CD4-positive, alpha-beta T cell (primary cell): ENCODE measurements at regions of chr4 and their contacts with region 1.

Region 1: DNA sequence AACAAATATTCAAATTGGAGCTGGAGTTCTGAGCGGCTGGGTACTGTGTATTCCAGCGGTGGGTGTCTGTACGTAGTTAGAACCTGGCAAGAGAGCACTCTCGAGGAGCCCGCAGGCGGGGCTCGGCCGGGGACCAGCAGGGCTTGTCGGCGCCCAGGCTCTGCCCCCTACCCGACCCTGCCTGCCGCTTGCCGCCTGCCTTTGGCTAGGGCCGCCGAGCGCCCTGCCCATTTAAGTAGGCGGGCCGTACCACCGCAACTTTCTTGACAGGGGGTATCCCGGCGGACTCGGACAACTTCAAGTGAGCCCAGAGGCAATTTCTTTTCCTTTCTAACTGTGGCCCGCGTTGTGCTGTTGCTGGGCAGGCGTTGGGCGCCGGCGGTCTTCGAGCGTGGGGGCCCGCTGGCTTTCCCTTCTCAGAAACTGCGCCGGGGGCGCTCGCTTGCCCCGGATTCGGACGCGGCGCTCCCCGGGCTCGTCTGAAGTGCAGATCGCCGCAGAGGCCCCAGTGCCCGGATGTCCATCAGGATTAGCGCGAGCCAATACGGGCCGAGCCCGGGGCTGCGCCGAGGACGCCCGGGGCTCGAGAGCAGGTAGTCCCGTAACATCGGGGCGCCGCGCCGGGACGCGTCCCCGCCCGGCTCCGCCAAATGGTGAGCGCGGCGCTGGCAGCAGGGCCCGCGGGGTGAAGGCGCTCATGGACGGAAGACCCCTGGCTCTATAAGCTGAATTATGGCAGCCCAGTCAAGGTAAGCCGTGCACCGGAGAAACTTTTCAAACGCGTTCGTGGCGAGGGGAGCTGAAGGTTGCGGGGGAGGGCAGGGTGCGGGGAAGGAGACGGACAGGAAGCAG is 72.1 kb downstream of the AFF1 start:
- DNase-seq: peak; percentile 82 to 95 (median 88)
- ATAC-seq: peak; percentile 25
- H3K4me3 ChIP-seq: peak overlapping the region; percentile 89
- H3K4me3 Mint-ChIP-seq: peak overlapping the region; percentile 90
- H3K27ac ChIP-seq: peak overlapping the region; percentile 83 to 90
- H3K27ac Mint-ChIP-seq: peak overlapping the region; percentile 96
- H3K4me1 ChIP-seq: peaks cover 24% of the 10 kb centered on the region
- H3K4me1 Mint-ChIP-seq: peaks cover 58% of the 10 kb centered on the region
- H3K27me3 ChIP-seq: no peaks in the 10 kb centered on the region
- H3K27me3 Mint-ChIP-seq: no peaks in the 10 kb centered on the region
- CTCF ChIP-seq: peak; percentile 65

Region 2: DNA sequence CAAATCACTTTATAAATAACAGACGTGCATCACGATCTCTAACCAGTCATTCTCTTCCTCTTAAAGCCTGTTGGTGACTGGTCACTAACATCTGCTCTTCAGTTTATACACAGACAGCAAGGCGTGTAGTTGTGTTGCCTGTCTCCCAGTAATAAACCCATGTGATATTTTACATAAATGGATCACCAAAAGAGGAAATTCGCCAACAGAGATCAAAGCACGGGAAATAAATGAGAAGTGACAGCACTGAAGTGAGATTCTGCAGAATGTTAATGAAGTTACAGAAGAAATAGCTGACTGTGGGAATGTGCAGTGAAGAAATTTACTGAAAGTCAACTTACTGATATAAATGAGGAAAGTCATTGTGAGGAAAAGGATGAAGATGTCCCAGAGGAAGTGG is 25.1 kb before region 1 on chr4:
- CTCF ChIA-PET with region 1: no interaction called
- POLR2A ChIA-PET with region 1: interaction called, 13 read pairs
- intact Hi-C with region 1: no loop called
- DNase-seq: peak in 3 of 14 experiments; percentile 43 to 58 (median 44)
- ATAC-seq: peak; percentile 59
- H3K4me3 ChIP-seq: no peak overlapping the region
- H3K4me3 Mint-ChIP-seq: peak overlapping the region; percentile 21
- H3K27ac ChIP-seq: no peak overlapping the region
- H3K27ac Mint-ChIP-seq: peak overlapping the region; percentile 19
- H3K4me1 ChIP-seq: peaks cover 9% of the 10 kb centered on the region
- H3K4me1 Mint-ChIP-seq: peaks cover 33% of the 10 kb centered on the region
- H3K27me3 ChIP-seq: no peaks in the 10 kb centered on the region
- H3K27me3 Mint-ChIP-seq: no peaks in the 10 kb centered on the region
- CTCF ChIP-seq: no peak

Region 3: GRCh38 chr4:87044511-87045233 is 37.8 kb after region 1 on chr4:
- CTCF ChIA-PET with region 1: no interaction called
- POLR2A ChIA-PET with region 1: interaction called, 3 read pairs
- intact Hi-C with region 1: loop called in 1 of 2 experiments (anchors 5 kb)
- DNase-seq: no peak
- ATAC-seq: no peak
- H3K4me3 ChIP-seq: no peak overlapping the region
- H3K4me3 Mint-ChIP-seq: no peak overlapping the region
- H3K27ac ChIP-seq: no peak overlapping the region
- H3K27ac Mint-ChIP-seq: no peak overlapping the region
- H3K4me1 ChIP-seq: peaks cover 14% of the 10 kb centered on the region
- H3K4me1 Mint-ChIP-seq: peaks cover 40% of the 10 kb centered on the region
- H3K27me3 ChIP-seq: no peaks in the 10 kb centered on the region
- H3K27me3 Mint-ChIP-seq: no peaks in the 10 kb centered on the region
- CTCF ChIP-seq: no peak

Region 4: GRCh38 chr4:87093443-87094123 is 86.7 kb after region 1 on chr4:
- CTCF ChIA-PET with region 1: interaction called, 12 read pairs
- POLR2A ChIA-PET with region 1: interaction called, 13 read pairs
- intact Hi-C with region 1: loop called (anchors 2 kb)
- DNase-seq: peak in 13 of 14 experiments; percentile 5 to 74 (median 30)
- ATAC-seq: peak; percentile 84
- H3K4me3 ChIP-seq: no peak overlapping the region
- H3K4me3 Mint-ChIP-seq: no peak overlapping the region
- H3K27ac ChIP-seq: no peak overlapping the region
- H3K27ac Mint-ChIP-seq: peak overlapping the region; percentile 74
- H3K4me1 ChIP-seq: peaks cover 5% of the 10 kb centered on the region
- H3K4me1 Mint-ChIP-seq: peaks cover 20% of the 10 kb centered on the region
- H3K27me3 ChIP-seq: no peaks in the 10 kb centered on the region
- H3K27me3 Mint-ChIP-seq: no peaks in the 10 kb centered on the region
- CTCF ChIP-seq: peak; percentile 72

Region 5: GRCh38 chr4:87220094-87220822 is 213.4 kb after region 1 on chr4 and contains the start of gene KLHL8:
- CTCF ChIA-PET with region 1: no interaction called
- POLR2A ChIA-PET with region 1: interaction called, 14 read pairs
- intact Hi-C with region 1: loop called (anchors 5 kb)
- DNase-seq: peak; percentile 71 to 94 (median 83)
- ATAC-seq: peak; percentile 88
- H3K4me3 ChIP-seq: peak within 1 kb of the TSS; percentile 96
- H3K4me3 Mint-ChIP-seq: peak within 1 kb of the TSS; percentile 96
- H3K27ac ChIP-seq: peak within 1 kb of the TSS; percentile 79 to 88
- H3K27ac Mint-ChIP-seq: peak within 1 kb of the TSS; percentile 88
- H3K4me1 ChIP-seq: peaks cover 24% of the 10 kb centered on the region
- H3K4me1 Mint-ChIP-seq: peaks cover 24% of the 10 kb centered on the region
- H3K27me3 ChIP-seq: no peaks in the 10 kb centered on the region
- H3K27me3 Mint-ChIP-seq: no peaks in the 10 kb centered on the region
- CTCF ChIP-seq: no peak
- total RNA-seq, gene KLHL8: 6.3 to 7.0 TPM

Region 6: DNA sequence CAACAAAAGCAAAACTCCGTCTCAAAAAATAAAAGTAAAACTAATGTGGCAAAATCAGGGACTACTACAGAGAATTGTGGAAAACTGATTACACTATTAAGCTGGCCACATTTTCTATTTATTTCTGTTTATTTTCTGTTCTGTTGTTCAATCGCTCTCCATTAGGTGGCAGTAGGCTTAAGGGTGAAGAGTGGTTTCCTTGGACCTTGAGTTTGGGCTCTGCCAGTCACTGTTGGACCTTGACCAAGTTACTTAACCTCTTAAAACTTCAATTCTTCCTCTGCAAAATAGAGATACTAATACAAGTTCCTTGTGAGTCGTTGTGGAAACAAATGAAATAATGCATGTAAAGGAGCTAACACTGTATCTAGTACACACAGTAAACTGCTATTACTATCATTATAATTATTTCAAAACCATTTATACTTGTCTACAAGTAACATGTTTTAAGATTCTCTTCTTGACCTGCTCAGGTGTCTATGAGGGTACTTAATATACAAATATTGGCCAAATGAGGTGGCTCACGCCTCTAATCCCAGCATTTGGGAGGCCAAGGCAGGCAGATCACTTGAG is 368.9 kb after region 1 on chr4:
- CTCF ChIA-PET with region 1: no interaction called
- POLR2A ChIA-PET with region 1: no interaction called
- intact Hi-C with region 1: no loop called
- DNase-seq: peak in 4 of 14 experiments; percentile 11 to 63 (median 50)
- ATAC-seq: no peak
- H3K4me3 ChIP-seq: no peak overlapping the region
- H3K4me3 Mint-ChIP-seq: no peak overlapping the region
- H3K27ac ChIP-seq: no peak overlapping the region
- H3K27ac Mint-ChIP-seq: no peak overlapping the region
- H3K4me1 ChIP-seq: no peaks in the 10 kb centered on the region
- H3K4me1 Mint-ChIP-seq: peaks cover 6% of the 10 kb centered on the region
- H3K27me3 ChIP-seq: no peaks in the 10 kb centered on the region
- H3K27me3 Mint-ChIP-seq: no peaks in the 10 kb centered on the region
- CTCF ChIP-seq: no peak

Region 7: DNA sequence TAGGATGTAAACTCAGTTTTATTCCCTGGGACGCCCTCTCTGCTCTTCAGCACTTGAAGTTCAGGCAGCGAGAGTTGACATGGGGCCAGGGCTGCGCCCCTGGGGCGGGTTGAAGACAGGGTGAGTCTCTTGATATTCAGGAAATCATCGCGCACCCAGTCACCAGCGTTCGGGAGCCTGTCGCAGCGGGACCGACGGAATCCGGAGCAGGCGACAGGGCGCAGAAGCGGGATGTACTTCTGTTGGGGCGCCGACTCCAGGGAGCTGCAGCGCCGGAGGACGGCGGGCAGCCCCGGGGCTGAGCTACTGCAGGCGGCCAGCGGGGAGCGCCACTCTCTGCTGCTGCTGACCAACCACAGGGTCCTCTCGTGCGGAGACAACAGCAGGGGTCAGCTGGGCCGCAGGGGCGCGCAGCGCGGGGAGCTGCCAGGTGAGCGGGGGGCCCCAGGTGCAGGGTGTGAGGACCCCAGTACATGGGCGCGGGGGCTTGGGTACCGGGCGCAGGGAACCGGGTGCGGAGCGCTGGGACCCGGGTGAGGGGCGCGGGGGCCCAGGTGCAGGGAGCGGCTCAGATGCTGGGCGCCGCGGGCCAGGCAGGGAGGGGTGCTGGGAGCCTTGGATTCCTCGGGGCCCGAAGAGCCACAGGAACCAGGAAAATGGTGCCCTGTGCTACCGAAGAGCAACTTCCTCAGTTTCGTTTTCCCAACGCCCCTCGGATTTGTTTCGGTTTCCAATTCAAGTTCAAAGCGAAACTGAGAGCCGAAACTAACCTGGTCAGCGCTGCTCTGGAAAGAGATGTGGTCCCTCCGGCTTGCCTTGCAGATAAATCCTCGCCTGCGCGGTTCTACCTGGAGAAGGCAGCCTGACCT is 1372.0 kb after region 1 on chr4 and contains the start of gene HERC6:
- CTCF ChIA-PET with region 1: no interaction called
- POLR2A ChIA-PET with region 1: no interaction called
- intact Hi-C with region 1: loop called in 1 of 2 experiments (anchors 10 kb)
- DNase-seq: peak; percentile 48 to 93 (median 59)
- ATAC-seq: peak; percentile 62
- H3K4me3 ChIP-seq: peak within 1 kb of the TSS; percentile 74
- H3K4me3 Mint-ChIP-seq: peak within 1 kb of the TSS; percentile 94
- H3K27ac ChIP-seq: peak within 1 kb of the TSS; percentile 47 to 89
- H3K27ac Mint-ChIP-seq: peak within 1 kb of the TSS; percentile 93
- H3K4me1 ChIP-seq: peaks cover 35% of the 10 kb centered on the region
- H3K4me1 Mint-ChIP-seq: peaks cover 48% of the 10 kb centered on the region
- H3K27me3 ChIP-seq: no peaks in the 10 kb centered on the region
- H3K27me3 Mint-ChIP-seq: no peaks in the 10 kb centered on the region
- CTCF ChIP-seq: peak; percentile 76
- total RNA-seq, gene HERC6: 9.5 to 10.6 TPM